ENCODE measurements at regions of chr3 and their contacts with region 1.

Region 1: DNA sequence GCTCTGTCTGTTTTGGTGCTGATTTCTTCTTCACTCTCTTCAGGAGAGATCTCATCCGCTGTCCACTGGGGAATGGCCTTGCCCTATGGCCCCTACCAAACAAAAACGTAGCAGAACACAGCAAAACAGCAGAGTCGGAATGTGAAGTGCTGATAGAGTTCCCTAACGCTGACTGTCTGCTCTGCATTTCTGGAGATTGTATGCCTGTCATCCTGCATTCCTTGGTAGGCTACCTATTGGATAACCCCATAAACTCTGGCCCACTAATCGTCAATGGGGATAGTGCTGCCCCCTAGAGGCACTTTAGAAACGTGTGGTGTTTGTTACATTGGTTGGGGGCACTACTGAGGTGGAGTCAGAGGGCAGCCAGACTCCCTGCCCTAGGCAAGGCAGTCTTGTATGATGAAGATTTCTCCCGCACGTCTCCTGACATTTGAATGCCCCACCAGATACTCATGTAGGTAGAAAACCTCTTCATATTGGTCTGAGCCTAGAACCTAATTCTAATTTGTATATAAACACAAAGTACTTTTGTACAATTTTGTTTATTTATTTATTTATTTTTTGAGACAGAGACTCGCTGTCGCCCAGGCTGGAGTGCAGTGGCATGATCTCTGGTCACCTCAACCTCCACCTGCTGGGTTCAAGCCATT is 15.6 kb upstream of the MAGEF1 start:
- DNase-seq: peak in 1 of 2 donors; percentile 45
- ATAC-seq: peak; percentile 88 to 92
- H3K4me3 ChIP-seq: no peak overlapping the region
- H3K27ac ChIP-seq: no peak overlapping the region
- H3K4me1 ChIP-seq: no peaks in the 10 kb centered on the region
- H3K27me3 ChIP-seq: no peaks in the 10 kb centered on the region
- CTCF ChIP-seq: peak; percentile 37 to 71 (median 61)
- POLR2A ChIP-seq: no peak

Region 2: GRCh38 chr3:184561061-184561912 is 166.2 kb before region 1 on chr3 and contains the start of gene EPHB3:
- in situ Hi-C with region 1: no loop called
- intact Hi-C with region 1: loop called (anchors 1 kb)
- DNase-seq: peak; percentile 94 to 98
- ATAC-seq: peak; percentile 93
- H3K4me3 ChIP-seq: peak within 1 kb of the TSS; percentile 47 to 77 (median 63)
- H3K27ac ChIP-seq: peak within 1 kb of the TSS in 3 of 4 donors; percentile 18 to 44 (median 28)
- H3K4me1 ChIP-seq: peaks cover 13 to 15% of the 10 kb centered on the region in 2 donors
- H3K27me3 ChIP-seq: peaks cover 0 to 7% (median 7%) of the 10 kb centered on the region in 3 donors
- CTCF ChIP-seq: peak; percentile 97 to 99 (median 98)
- POLR2A ChIP-seq: peak; percentile 60 to 89
- total RNA-seq, gene EPHB3: 0.10 to 0.24 (median 0.12) TPM

Region 3: DNA sequence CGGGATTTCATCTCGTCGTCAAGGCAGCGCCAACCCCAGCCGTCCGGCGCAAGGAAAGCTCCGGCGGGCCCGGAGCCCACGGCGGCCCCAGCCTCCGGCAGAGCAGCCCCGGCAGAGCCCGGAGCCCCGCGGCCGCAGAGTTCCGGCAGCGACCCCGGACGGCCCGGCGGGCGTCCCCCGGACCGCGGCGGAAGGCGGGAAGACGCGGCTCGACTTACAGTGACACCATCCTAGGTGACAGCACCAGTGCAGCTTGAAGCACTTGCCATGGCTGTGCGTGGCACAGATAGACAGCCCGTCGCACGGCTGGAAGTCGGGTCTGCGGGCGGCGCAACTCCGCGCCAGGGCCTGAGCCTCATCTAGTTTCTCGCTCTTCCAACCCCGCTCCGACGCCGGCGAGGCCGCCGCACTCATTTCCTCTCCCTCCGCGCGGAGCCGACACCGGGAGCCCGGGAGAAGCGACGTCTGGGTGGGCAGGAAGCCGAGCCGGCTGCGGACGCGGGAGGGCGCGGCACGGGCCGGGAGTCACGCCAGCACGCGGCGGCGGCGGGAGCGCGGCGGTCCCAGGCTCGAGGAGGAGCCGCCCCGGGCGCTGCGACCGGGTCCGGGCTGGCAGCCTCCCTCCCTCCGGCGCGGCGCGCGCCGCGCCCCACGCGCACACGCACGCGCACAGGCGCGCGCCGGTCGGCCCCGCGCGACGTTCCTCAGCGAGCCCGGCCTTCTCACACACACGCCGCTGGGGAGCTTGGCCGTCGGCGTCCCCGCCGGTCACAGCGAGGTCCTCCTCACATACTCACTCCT is 425.1 kb after region 1 on chr3 and contains the start of gene C3orf70:
- in situ Hi-C with region 1: no loop called
- intact Hi-C with region 1: no loop called
- DNase-seq: peak in 1 of 2 donors; percentile 12
- ATAC-seq: peak; percentile 43 to 44
- H3K4me3 ChIP-seq: peak within 1 kb of the TSS; percentile 53 to 59 (median 57)
- H3K27ac ChIP-seq: peak within 1 kb of the TSS; percentile 53 to 68 (median 63)
- H3K4me1 ChIP-seq: no peaks in the 10 kb centered on the region
- H3K27me3 ChIP-seq: peaks cover 30 to 46% (median 44%) of the 10 kb centered on the region in 3 donors
- CTCF ChIP-seq: no peak
- POLR2A ChIP-seq: no peak
- total RNA-seq, gene C3orf70: 0.42 to 1.1 (median 0.59) TPM